Left cardiac atrium (tissue), 4 donors: ENCODE measurements at regions of chr9 and their contacts with region 1.

Region 1: DNA sequence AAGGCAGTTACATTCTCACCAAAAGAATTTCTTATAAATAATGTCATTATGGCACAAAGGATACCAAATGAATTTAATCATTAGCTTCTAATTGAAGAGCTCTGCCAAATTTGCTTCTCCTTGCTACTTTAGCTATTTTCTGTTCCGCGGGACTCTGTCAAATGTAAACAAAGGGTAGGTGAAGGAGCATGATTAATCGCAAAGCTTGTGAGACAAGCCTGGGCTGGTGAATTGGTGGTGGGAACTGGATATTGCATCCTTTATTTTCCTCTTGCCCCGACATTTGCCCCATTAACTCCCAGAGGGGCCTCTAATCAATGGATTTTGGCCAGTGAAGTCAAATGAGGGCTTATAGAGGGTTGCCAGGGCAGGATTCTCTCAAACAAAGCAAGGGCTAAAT is 234.2 kb upstream of the RFX3 start:
- DNase-seq: no peak
- ATAC-seq: no peak

Region 2: GRCh38 chr9:3650994-3651622 is 108.9 kb before region 1 on chr9:
- intact Hi-C with region 1: no loop called
- DNase-seq: no peak
- ATAC-seq: no peak

Region 3: GRCh38 chr9:3783156-3783555 is 23.1 kb after region 1 on chr9:
- intact Hi-C with region 1: loop called in 1 of 2 experiments (anchors 2 kb)
- DNase-seq: no peak
- ATAC-seq: no peak